ENCODE measurements at regions of chr4 and their contacts with region 1.

Region 1: GRCh38 chr4:118968005-118968404 is 79.4 kb downstream of the SYNPO2 start:
- DNase-seq: peak; percentile 46
- ATAC-seq: peak; percentile 83 to 88

Region 2: GRCh38 chr4:118740869-118741268 is 227.1 kb before region 1 on chr4:
- intact Hi-C with region 1: loop called in 1 of 2 experiments (anchors 1 kb)
- DNase-seq: no peak
- ATAC-seq: no peak

Region 3: DNA sequence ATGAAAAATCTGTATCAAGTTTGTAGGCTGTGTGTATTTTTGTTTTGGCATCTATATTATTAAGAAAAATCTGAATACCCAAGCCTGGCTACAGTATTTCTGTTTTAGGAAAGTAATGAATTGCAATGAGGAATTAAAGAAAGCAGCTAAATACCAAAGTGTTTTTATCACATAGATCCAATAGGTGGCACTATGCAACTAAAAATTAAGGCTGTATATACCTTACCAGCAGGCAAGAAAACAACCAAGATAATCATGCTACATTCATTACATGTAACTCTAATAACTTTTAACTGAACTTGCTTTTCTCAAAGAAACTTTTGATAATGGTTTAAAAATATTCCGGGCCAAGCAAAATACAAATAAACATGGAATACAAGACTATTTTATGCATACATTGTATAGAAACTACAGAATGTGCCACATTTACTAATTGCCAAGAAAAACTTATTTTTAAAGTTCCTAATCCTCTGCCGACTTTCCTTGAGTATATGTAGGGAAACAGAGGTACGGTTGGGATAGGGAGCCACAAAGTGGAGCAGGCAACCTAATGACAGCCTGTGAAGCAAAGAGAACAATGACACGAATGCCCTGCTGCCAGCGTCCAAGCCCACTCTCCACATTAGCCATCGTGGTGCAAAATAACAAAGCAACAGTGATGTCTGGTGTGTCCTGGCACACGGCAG is 195.8 kb before region 1 on chr4:
- intact Hi-C with region 1: loop called (anchors 2 to 5 kb)
- DNase-seq: no peak
- ATAC-seq: peak; percentile 80 to 82

Region 4: DNA sequence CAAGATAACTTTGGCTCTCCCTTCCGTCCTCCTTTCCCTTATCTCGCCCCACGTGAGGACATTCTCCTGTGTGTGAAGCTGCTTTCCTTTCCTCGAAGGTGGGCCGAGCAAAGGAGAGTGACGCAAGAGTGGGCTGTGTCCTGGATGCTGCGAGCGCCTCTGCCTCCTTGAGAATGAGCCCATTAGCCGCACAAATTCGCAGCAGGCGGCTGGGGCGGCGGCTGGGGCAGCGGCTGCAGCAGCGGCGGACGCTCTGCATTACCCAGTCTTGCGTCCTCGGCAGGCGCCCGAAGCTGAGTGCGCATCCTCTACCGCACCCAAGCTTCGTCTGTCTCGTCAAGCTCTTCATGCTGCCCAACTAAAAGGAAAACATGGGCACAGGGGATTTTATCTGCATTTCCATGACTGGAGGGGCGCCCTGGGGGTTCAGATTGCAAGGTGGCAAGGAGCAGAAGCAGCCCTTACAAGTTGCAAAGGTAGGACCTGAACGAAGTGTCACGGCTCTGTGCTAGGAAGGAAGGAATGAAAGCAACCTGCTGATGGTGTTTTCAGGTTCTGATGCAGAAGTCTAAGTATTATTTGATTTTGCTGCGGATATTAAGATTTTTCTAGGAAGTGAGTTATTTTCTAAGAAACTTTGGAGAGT is 79.2 kb before region 1 on chr4 and contains the start of gene SYNPO2:
- intact Hi-C with region 1: loop called in 1 of 2 experiments (anchors 5 kb)
- DNase-seq: peak; percentile 88
- ATAC-seq: peak; percentile 90 to 98
- total RNA-seq, gene SYNPO2: 67.6 to 94.4 TPM

Measured in left cardiac atrium (tissue), 4 donors.